ENCODE measurements at regions of chr9 and their contacts with region 1.

Region 1: DNA sequence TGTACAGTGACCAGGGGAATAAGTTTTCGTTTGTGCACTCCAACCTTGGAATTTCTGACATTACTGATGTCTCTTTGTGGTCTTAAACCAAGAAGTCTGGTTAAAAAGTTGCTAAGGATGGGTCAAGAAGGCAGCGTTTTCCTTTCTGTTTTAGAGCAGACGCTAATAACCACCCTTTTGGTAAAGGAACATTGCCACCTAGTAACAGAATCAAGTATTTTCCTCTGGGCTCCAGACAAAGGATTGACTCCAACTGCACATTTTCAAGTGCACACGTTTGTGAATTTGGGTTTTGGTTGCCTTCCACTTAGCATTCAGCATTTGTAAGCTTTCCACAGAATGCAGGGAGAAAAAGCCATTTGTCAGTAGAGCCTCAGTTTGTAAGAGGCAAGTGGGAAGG is 22.2 kb upstream of the CEP78 start:
- DNase-seq: no peak
- H3K4me3 Mint-ChIP-seq: no peak overlapping the region
- H3K27ac Mint-ChIP-seq: no peak overlapping the region
- H3K4me1 Mint-ChIP-seq: no peaks in the 10 kb centered on the region
- H3K27me3 Mint-ChIP-seq: no peaks in the 10 kb centered on the region
- CTCF ChIP-seq: no peak

Region 2: DNA sequence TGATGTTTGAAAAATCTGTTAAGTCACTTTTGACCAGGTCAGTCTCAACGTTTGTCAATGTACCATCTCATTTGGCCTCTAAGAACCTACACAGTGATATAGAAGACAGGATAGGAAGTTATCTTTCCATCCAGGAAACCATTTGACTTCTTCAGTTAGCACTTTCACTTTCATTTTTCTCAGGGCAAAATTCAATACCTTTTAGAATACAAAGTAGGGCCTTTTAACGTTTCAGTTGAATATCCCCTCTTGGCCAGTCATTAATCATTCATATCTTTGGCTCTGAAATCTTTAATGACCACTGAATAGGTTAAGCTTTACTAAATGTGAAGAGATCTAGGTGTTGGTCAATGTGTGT is 81.0 kb before region 1 on chr9:
- CTCF ChIA-PET with region 1: no interaction called
- intact Hi-C with region 1: loop called (anchors 2 kb)
- DNase-seq: no peak
- H3K4me3 Mint-ChIP-seq: peak overlapping the region; percentile 14
- H3K27ac Mint-ChIP-seq: no peak overlapping the region
- H3K4me1 Mint-ChIP-seq: no peaks in the 10 kb centered on the region
- H3K27me3 Mint-ChIP-seq: no peaks in the 10 kb centered on the region
- CTCF ChIP-seq: no peak

Region 3: GRCh38 chr9:78273761-78274160 is 60.0 kb after region 1 on chr9:
- CTCF ChIA-PET with region 1: no interaction called
- intact Hi-C with region 1: no loop called
- DNase-seq: no peak
- H3K4me3 Mint-ChIP-seq: no peak overlapping the region
- H3K27ac Mint-ChIP-seq: no peak overlapping the region
- H3K4me1 Mint-ChIP-seq: no peaks in the 10 kb centered on the region
- H3K27me3 Mint-ChIP-seq: no peaks in the 10 kb centered on the region
- CTCF ChIP-seq: no peak